B cell (primary cell): ENCODE measurements at regions of chr9 and their contacts with region 1.

Region 1: DNA sequence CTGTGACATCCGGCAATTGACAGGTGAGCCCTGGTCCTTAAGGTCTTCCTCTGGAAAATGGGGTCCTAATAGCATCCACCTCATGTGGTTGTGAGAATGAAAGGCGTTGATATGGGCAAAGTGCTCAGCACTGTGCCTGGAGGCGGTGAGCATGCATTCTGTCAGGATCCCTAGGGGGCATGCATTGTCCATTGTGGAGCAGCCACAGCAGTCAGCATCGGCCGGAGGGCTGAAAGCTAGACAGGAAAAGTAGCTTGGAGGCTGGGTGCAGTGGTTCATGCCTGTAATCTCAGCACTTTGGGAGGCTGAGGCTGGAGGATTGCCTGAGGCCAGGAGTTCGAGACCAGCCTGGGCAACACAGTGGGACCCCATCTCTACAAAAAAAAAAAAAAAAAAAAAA is 122.2 kb downstream of the LHX2 start:
- DNase-seq: no peak
- ATAC-seq: no peak
- H3K4me3 ChIP-seq: no peak overlapping the region
- H3K4me3 Mint-ChIP-seq: no peak overlapping the region
- H3K27ac ChIP-seq: no peak overlapping the region
- H3K27ac Mint-ChIP-seq: no peak overlapping the region
- H3K4me1 ChIP-seq: peaks cover 0 to 15% of the 10 kb centered on the region in 2 donors
- H3K4me1 Mint-ChIP-seq: peaks cover 25% of the 10 kb centered on the region
- H3K27me3 ChIP-seq: no peaks in the 10 kb centered on the region
- H3K27me3 Mint-ChIP-seq: no peaks in the 10 kb centered on the region
- CTCF ChIP-seq: no peak

Region 2: DNA sequence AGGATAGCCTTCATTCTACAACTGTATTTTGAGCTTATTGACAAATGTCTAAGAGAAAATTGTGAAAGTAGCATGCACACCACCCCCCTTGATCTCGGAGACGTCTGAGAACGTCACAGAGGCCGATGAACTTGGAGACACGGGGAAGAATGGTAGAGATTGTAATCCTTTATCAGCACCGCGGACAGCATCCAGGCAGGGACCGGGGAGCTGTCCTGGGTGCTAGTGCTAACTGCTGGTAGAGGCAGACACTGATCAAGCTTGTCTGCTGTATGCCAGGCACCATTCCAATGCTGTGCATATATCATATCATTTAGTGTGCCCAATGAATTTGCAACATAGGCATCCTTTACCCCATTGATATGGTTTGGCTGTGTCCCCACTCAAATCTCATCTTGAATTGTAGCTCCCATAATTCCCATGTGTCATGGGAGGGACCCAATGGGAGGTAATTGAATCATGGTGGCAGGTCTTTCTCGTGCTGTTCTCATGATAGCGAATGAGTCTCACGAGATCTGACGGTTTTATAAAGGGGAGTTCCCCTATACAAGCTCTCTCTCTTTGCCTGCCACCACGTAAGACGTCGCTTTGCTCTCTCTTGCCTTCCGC is 23.3 kb before region 1 on chr9:
- CTCF ChIA-PET with region 1: no interaction called
- POLR2A ChIA-PET with region 1: no interaction called
- intact Hi-C with region 1: no loop called
- DNase-seq: peak; percentile 49
- ATAC-seq: peak; percentile 43
- H3K4me3 ChIP-seq: no peak overlapping the region
- H3K4me3 Mint-ChIP-seq: no peak overlapping the region
- H3K27ac ChIP-seq: no peak overlapping the region
- H3K27ac Mint-ChIP-seq: no peak overlapping the region
- H3K4me1 ChIP-seq: no peaks in the 10 kb centered on the region
- H3K4me1 Mint-ChIP-seq: peaks cover 3% of the 10 kb centered on the region
- H3K27me3 ChIP-seq: peaks cover 0 to 14% (median 3%) of the 10 kb centered on the region in 4 experiments
- H3K27me3 Mint-ChIP-seq: peaks cover 39% of the 10 kb centered on the region
- CTCF ChIP-seq: no peak

Region 3: DNA sequence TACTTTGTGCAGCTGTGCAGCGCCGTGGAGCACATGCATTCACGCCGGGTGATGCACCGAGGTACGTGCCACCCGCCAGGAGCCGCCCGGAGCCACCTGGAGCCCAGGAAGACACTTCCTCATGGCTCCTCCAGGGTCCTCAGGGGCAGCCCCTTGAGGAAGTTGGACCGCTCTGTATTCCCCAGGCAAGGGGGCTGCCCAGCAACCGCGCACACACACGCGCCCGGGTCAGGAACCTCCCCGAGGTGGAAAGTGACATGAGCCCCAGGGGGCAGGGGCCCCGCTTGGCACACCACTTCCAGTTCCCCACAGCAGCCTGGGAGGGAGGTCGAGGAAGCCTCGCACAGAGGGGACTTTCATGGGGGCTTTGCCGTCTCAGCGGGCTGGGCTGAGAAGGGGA is 192.7 kb after region 1 on chr9:
- CTCF ChIA-PET with region 1: interaction called, 59 read pairs
- POLR2A ChIA-PET with region 1: no interaction called
- intact Hi-C with region 1: no loop called
- DNase-seq: no peak
- ATAC-seq: no peak
- H3K4me3 ChIP-seq: no peak overlapping the region
- H3K4me3 Mint-ChIP-seq: no peak overlapping the region
- H3K27ac ChIP-seq: no peak overlapping the region
- H3K27ac Mint-ChIP-seq: peak overlapping the region; percentile 50
- H3K4me1 ChIP-seq: peaks cover 0 to 22% of the 10 kb centered on the region in 2 donors
- H3K4me1 Mint-ChIP-seq: peaks cover 27% of the 10 kb centered on the region
- H3K27me3 ChIP-seq: no peaks in the 10 kb centered on the region
- H3K27me3 Mint-ChIP-seq: no peaks in the 10 kb centered on the region
- CTCF ChIP-seq: no peak